ENCODE measurements at regions of chr11 and their contacts with region 1.

Region 1: DNA sequence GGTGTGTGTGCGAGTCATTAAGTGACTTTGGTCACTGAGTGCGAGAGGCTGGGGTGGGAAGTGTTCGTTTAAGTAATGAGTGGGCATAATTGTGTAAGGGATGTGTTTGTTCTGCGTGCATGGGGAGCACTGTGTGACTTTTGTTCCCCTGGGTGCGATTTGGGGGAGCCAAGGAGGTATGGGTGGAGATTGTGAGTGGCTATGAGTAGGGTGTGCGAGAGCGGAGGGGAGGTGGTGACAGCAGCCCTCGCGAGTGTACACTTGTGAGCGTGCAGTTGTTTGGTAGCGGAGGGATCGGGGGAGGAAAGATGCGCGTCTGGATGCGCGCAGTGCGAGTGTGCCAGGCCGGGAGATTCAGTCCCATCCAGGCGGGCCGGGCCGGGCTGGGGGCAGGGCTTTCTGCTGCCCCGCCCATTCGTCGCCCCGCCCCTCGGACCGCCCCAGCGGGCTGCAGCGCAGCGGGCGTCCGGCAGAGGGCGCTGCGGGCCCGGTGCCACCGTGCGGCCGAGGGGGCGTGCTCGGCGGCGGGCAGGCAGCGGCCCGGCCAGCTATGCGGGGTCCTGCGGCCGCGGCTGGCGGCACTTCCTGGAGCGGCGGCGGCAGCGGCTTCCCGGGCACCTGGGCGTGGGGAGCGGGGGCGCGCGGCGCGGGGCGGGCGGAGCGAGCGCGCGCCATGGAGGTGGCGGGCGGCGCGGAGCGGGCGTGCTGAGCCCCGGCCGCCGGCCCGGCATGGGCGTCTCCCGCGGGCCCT is at the start of gene DGKZ:
- DNase-seq: peak; percentile 88
- H3K4me3 Mint-ChIP-seq: peak within 1 kb of the TSS; percentile 92
- H3K27ac Mint-ChIP-seq: peak within 1 kb of the TSS; percentile 98
- H3K4me1 Mint-ChIP-seq: peaks cover 81% of the 10 kb centered on the region
- H3K27me3 Mint-ChIP-seq: no peaks in the 10 kb centered on the region

Region 2: DNA sequence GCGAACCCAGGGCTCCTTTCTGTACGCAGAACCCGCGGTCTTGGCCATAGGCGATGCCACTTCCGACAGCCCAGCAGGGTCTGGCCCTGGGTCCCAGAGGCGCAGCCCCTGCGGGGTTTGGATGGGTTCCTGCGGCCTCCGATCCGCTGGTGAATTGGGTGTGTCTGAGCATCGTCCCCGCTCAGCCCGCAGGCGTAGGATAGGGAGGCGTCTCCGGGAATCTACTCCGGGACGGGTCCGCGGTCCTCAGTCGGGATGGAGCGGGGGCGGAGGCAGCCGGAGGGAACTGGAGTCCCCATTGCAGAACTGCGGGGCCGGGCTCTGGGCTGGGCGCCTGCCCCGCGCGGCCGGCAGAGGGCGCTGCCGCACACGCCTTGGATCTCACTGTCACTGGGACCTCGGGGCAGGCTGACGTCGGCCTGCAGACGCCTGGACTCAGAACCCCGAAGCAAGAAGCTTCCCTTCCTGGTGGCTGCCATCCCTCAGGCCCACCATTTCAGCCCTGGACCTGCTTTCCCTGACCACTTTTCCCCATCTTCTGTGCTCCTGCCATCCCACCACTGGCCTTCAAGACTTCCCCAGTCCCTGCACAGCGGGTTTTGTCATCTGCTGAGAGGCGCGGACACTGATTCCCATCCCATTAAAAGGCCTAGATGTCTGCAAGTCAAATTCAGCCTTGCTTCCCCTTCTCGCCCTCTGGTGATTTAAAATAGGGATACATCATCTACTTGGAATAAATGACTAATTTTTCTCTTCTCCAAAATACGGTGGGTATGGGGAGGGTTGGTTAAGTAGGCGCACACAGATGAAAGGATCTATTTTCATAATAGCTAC is 107.9 kb before region 1 on chr11:
- CTCF ChIA-PET with region 1: interaction called, 10 read pairs
- DNase-seq: peak; percentile 83
- H3K4me3 Mint-ChIP-seq: peak overlapping the region; percentile 58
- H3K27ac Mint-ChIP-seq: no peak overlapping the region
- H3K4me1 Mint-ChIP-seq: peaks cover 49% of the 10 kb centered on the region
- H3K27me3 Mint-ChIP-seq: peaks cover 42% of the 10 kb centered on the region

Region 3: GRCh38 chr11:46332568-46333393 is 14.3 kb before region 1 on chr11:
- CTCF ChIA-PET with region 1: interaction called, 17 read pairs
- DNase-seq: peak; percentile 47
- H3K4me3 Mint-ChIP-seq: peak overlapping the region; percentile 75
- H3K27ac Mint-ChIP-seq: no peak overlapping the region
- H3K4me1 Mint-ChIP-seq: peaks cover 74% of the 10 kb centered on the region
- H3K27me3 Mint-ChIP-seq: peaks cover 86% of the 10 kb centered on the region

Region 4: GRCh38 chr11:46367244-46367915 is 20.3 kb after region 1 on chr11:
- CTCF ChIA-PET with region 1: interaction called, 255 read pairs
- DNase-seq: peak; percentile 82
- H3K4me3 Mint-ChIP-seq: no peak overlapping the region
- H3K27ac Mint-ChIP-seq: peak overlapping the region; percentile 67
- H3K4me1 Mint-ChIP-seq: peaks cover 34% of the 10 kb centered on the region
- H3K27me3 Mint-ChIP-seq: no peaks in the 10 kb centered on the region

Region 5: GRCh38 chr11:46489661-46490560 is 142.8 kb after region 1 on chr11:
- CTCF ChIA-PET with region 1: no interaction called
- DNase-seq: peak; percentile 61
- H3K4me3 Mint-ChIP-seq: no peak overlapping the region
- H3K27ac Mint-ChIP-seq: no peak overlapping the region
- H3K4me1 Mint-ChIP-seq: peaks cover 3% of the 10 kb centered on the region
- H3K27me3 Mint-ChIP-seq: no peaks in the 10 kb centered on the region

Measured in activated naive CD4-positive, alpha-beta T cell treated with anti-CD3 and anti-CD28 coated beads, Interleukin-2, amount 10 ng/mL, durations not matched to agents 7 days and 5 days (primary cell).